IMR-90 (cell line): ENCODE measurements at regions of chr10 and their contacts with region 1.

Region 1: DNA sequence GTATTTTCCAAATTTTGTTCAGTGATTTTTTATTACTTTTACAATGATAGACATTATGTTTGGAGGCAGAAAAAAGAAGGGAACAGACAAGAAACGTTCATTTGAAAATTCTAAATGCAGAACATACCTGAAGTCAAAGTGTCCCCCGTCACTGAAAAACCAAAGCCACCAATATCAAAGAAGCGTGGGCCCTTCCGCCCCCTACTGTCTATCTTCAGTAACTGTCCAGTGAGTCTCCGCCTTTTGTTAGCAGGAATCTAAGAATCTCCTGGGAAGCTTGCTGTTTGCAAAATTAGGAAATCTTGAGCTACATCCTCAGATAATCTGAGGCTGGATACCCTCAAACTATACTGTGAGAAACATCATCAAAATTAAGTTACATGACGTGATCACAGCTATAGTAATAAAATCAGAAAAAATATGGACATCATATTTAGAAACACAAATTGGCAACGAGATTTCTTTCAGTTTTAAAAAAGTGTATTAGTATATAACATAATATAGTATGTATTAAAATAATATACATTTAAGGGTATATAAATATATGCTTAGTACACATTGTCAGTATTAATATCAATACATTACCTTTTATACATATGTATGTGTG is 169.3 kb upstream of the AKR1E2 start:
- DNase-seq: peak; percentile 67
- ATAC-seq: peak; percentile 72
- H3K4me3 ChIP-seq: no peak overlapping the region
- H3K27ac ChIP-seq: no peak overlapping the region
- H3K4me1 ChIP-seq: peaks cover 2% of the 10 kb centered on the region
- H3K27me3 ChIP-seq: no peaks in the 10 kb centered on the region
- CTCF ChIP-seq: peak; percentile 82
- POLR2A ChIP-seq: peak; percentile 45; the same call in 1 of the 2 replicates
- RAD21 ChIP-seq: peak; percentile 96

Region 2: GRCh38 chr10:3186368-3186767 is 1470.3 kb before region 1 on chr10:
- CTCF ChIA-PET with region 1: interaction called, 3 read pairs
- POLR2A ChIA-PET with region 1: no interaction called
- dilution Hi-C with region 1: no loop called
- in situ Hi-C with region 1: loop called (anchors 10 kb)
- intact Hi-C with region 1: no loop called
- DNase-seq: no peak
- ATAC-seq: no peak
- H3K4me3 ChIP-seq: no peak overlapping the region
- H3K27ac ChIP-seq: no peak overlapping the region
- H3K4me1 ChIP-seq: no peaks in the 10 kb centered on the region
- H3K27me3 ChIP-seq: peaks cover 16% of the 10 kb centered on the region
- CTCF ChIP-seq: no peak
- POLR2A ChIP-seq: no peak
- RAD21 ChIP-seq: no peak

Region 3: GRCh38 chr10:3248888-3249758 is 1407.6 kb before region 1 on chr10:
- CTCF ChIA-PET with region 1: no interaction called
- POLR2A ChIA-PET with region 1: no interaction called
- dilution Hi-C with region 1: no loop called
- in situ Hi-C with region 1: no loop called
- intact Hi-C with region 1: loop called (anchors 5 kb)
- DNase-seq: peak; percentile 94
- ATAC-seq: peak; percentile 95
- H3K4me3 ChIP-seq: peak overlapping the region; percentile 11; the same call in 1 of the 2 replicates
- H3K27ac ChIP-seq: peak overlapping the region; percentile 89
- H3K4me1 ChIP-seq: peaks cover 4% of the 10 kb centered on the region
- H3K27me3 ChIP-seq: no peaks in the 10 kb centered on the region
- CTCF ChIP-seq: no peak
- POLR2A ChIP-seq: no peak
- RAD21 ChIP-seq: no peak; the same call in 1 of the 2 replicates

Region 4: DNA sequence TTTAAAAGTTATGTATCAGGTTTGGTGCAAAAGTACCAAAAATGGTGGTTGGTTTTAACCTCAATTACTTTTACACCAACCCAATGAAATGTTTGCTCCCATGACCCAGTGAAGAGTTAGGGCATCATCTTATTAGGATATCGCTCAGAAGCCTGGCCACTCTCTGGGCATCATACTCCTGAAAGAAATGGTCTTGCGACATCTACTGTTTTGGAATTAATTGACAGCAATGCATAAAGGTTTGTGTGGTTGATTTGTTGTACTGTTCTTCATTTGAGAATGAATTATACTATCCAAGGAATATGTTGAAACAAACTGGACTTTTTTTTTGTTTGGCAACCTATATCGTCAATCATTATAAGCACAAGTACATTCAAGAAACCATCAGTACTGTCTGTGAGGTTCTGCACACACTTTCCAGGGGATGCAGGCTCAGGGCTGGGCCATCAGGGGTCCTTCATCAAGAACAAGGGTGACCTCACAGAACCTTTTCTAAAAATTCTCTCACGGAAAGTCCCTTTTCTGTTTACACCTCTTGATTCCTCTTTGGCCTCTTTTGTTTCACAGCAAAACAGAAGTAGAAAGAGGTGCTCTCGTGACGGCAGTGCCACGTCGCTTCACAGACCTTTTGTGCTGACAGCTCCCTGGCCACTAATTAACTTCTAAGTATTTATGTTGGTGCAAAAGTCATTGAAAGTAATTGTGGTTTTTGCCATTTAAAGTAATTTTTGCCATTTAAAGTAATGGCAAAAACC is 754.4 kb before region 1 on chr10:
- CTCF ChIA-PET with region 1: no interaction called
- POLR2A ChIA-PET with region 1: no interaction called
- dilution Hi-C with region 1: no loop called
- in situ Hi-C with region 1: no loop called
- intact Hi-C with region 1: loop called (anchors 10 kb)
- DNase-seq: no peak
- ATAC-seq: no peak
- H3K4me3 ChIP-seq: no peak overlapping the region
- H3K27ac ChIP-seq: peak overlapping the region; percentile 6; the same call in 1 of the 2 replicates
- H3K4me1 ChIP-seq: peaks cover 10% of the 10 kb centered on the region
- H3K27me3 ChIP-seq: no peaks in the 10 kb centered on the region
- CTCF ChIP-seq: no peak
- POLR2A ChIP-seq: no peak
- RAD21 ChIP-seq: no peak

Region 5: GRCh38 chr10:4344511-4344994 is 312.1 kb before region 1 on chr10:
- CTCF ChIA-PET with region 1: no interaction called
- POLR2A ChIA-PET with region 1: no interaction called
- dilution Hi-C with region 1: no loop called
- in situ Hi-C with region 1: no loop called
- intact Hi-C with region 1: loop called (anchors 2 kb)
- DNase-seq: peak; percentile 100
- ATAC-seq: peak; percentile 99
- H3K4me3 ChIP-seq: no peak overlapping the region
- H3K27ac ChIP-seq: peak overlapping the region; percentile 82
- H3K4me1 ChIP-seq: peaks cover 9% of the 10 kb centered on the region
- H3K27me3 ChIP-seq: no peaks in the 10 kb centered on the region
- CTCF ChIP-seq: peak; percentile 30; the same call in 1 of the 2 replicates
- POLR2A ChIP-seq: peak; percentile 13; the same call in 1 of the 2 replicates
- RAD21 ChIP-seq: peak; percentile 53

Region 6: DNA sequence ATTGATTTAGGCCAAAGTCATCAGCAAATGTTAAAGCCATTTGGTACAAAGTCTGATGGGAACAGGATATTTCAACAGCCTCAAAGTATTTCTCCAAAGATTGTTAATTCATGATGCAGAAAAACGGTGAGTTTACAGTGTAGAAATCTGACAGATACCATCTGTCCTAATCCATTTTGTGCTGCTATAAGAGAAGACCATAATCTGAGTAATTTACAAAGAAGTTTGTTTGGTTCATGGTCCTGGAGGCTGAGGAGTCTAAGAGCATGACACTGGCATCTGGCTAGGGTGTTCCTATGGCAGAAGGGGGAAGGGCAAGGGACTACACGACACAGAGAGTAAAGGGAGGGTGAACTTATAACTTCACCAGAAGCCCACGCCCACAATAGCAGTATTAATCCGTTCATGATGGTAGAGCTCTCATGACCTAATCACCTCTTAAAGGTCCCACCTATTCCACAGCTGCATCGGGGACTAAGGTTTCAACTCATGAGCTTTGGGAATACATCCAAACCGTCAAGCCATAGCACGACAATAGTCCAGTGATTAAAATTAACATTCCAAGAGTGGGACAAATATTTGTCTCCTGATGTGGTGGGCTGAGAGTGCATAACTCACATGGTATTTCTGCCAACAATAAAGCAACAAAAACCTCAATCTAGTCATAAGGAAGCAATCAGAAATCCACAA is 129.3 kb before region 1 on chr10:
- CTCF ChIA-PET with region 1: interaction called, 6 read pairs
- POLR2A ChIA-PET with region 1: no interaction called
- dilution Hi-C with region 1: no loop called
- in situ Hi-C with region 1: no loop called
- intact Hi-C with region 1: loop called (anchors 5 kb)
- DNase-seq: peak; percentile 41
- ATAC-seq: peak; percentile 56; the same call in 1 of the 2 replicates
- H3K4me3 ChIP-seq: no peak overlapping the region
- H3K27ac ChIP-seq: peak overlapping the region; percentile 4; the same call in 1 of the 2 replicates
- H3K4me1 ChIP-seq: peaks cover 2% of the 10 kb centered on the region; the same call in 1 of the 2 replicates
- H3K27me3 ChIP-seq: no peaks in the 10 kb centered on the region
- CTCF ChIP-seq: no peak
- POLR2A ChIP-seq: no peak
- RAD21 ChIP-seq: no peak

Region 7: DNA sequence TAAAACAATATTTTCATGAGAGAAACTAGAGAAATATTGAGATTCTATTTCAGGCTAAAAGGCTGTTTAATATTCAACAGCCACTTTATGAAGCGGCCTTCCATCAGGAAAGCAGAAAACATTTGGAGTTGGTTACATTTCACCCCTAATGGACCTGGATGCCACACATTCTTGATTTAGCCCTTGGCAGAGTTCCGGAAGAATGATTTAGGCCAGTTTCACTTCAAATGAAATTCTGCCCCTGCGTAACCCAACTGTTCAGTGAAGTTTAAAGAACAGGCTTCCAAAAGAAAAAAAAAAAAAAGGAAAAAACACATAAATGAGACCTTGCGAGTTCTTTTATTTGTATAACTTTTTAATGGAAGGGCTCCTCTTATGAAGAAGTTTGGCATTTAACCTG is 69.9 kb before region 1 on chr10:
- CTCF ChIA-PET with region 1: no interaction called
- POLR2A ChIA-PET with region 1: no interaction called
- dilution Hi-C with region 1: no loop called
- in situ Hi-C with region 1: no loop called
- intact Hi-C with region 1: no loop called
- DNase-seq: peak; percentile 9
- ATAC-seq: no peak
- H3K4me3 ChIP-seq: no peak overlapping the region
- H3K27ac ChIP-seq: no peak overlapping the region
- H3K4me1 ChIP-seq: no peaks in the 10 kb centered on the region
- H3K27me3 ChIP-seq: no peaks in the 10 kb centered on the region
- CTCF ChIP-seq: no peak
- POLR2A ChIP-seq: no peak
- RAD21 ChIP-seq: no peak